HEK293 (cell line): ENCODE measurements at regions of chr10 and their contacts with region 1.

Region 1: GRCh38 chr10:79374312-79375191 is 27.3 kb downstream of the PPIF start:
- H3K4me3 ChIP-seq: no peak overlapping the region
- H3K27ac ChIP-seq: no peak overlapping the region
- H3K4me1 ChIP-seq: no peaks in the 10 kb centered on the region
- CTCF ChIP-seq: peak; percentile 87

Region 2: GRCh38 chr10:78931321-78932053 is 443.1 kb before region 1 on chr10:
- CTCF ChIA-PET with region 1: no interaction called
- POLR2A ChIA-PET with region 1: no interaction called
- H3K4me3 ChIP-seq: no peak overlapping the region
- H3K27ac ChIP-seq: no peak overlapping the region
- H3K4me1 ChIP-seq: no peaks in the 10 kb centered on the region
- CTCF ChIP-seq: no peak

Region 3: GRCh38 chr10:79468024-79468560 is 93.5 kb after region 1 on chr10:
- CTCF ChIA-PET with region 1: interaction called, 44 read pairs
- POLR2A ChIA-PET with region 1: no interaction called
- H3K4me3 ChIP-seq: no peak overlapping the region
- H3K27ac ChIP-seq: no peak overlapping the region
- H3K4me1 ChIP-seq: no peaks in the 10 kb centered on the region
- CTCF ChIP-seq: no peak

Region 4: DNA sequence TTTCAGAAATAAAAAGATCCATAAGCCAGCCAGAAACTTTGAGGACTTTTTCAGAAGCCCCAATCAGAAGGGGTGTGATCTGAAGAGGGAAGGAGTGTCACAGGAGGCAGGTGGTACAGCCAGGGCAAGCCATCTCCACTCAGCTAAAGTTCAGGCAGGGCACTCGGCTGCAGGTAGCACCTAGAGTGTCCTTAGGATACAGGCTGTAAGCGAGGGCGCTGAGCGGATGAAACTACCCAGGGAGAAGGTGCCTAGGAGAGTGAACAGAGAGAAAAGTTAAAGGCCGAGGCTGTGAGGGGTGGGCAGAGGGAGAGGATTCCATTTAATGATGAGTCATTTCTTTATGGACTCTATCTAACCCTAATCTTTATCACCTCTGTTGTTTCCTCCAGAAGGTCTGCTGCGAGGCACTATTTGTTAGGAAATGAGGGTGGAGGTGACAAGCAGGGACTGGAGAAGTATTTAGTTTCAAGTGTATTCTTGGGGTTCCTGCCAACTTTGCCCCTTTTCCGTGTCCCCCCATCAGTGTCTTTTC is 100.6 kb after region 1 on chr10:
- CTCF ChIA-PET with region 1: interaction called, 44 read pairs
- POLR2A ChIA-PET with region 1: no interaction called
- H3K4me3 ChIP-seq: no peak overlapping the region
- H3K27ac ChIP-seq: no peak overlapping the region
- H3K4me1 ChIP-seq: no peaks in the 10 kb centered on the region
- CTCF ChIP-seq: no peak

Region 5: GRCh38 chr10:79487296-79488194 is 113.0 kb after region 1 on chr10:
- CTCF ChIA-PET with region 1: interaction called, 85 read pairs
- POLR2A ChIA-PET with region 1: interaction called, 3 read pairs
- H3K4me3 ChIP-seq: no peak overlapping the region
- H3K27ac ChIP-seq: no peak overlapping the region
- H3K4me1 ChIP-seq: no peaks in the 10 kb centered on the region
- CTCF ChIP-seq: 0 out of 2 replicates have a peak, but pooled peaks have one; percentile 21

Region 6: DNA sequence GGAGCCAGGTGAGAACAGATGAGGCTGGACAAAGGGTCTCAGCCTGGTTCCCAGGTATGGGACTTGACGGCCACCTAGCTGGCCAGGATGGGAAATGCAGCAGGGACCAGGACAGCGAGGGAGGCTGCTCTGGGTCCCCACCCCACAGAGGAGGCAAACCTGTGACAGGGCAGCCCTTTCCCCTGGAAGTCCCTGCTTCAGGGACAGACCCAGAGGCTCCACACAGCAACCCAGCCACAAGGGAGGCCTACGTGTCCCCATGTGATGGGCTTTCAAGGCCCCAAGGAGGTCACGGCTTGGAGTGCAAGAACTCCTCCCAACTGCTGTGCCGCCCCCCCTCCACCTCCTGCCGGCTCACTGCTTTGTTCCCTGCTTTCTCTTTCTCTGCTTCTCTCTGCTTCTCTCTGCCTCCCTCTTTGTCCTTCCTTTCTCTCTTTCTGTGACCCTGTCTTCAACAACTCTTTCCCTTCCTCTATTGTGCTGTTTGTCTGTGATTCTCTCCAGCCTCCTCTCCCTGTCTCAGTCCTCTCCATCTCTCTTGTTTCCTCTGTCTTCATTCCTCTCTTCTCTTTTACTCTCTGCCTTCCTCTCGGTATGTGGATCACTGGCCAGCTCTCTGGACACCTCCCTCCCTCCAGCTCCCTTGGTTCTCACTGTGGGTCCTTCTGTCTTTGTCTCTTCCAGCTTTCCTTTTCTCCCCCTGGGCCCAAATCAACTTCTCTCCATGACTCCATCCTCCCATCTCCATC is 128.2 kb after region 1 on chr10:
- CTCF ChIA-PET with region 1: interaction called, 55 read pairs
- POLR2A ChIA-PET with region 1: no interaction called
- H3K4me3 ChIP-seq: no peak overlapping the region
- H3K27ac ChIP-seq: no peak overlapping the region
- H3K4me1 ChIP-seq: no peaks in the 10 kb centered on the region
- CTCF ChIP-seq: peak; percentile 32; the same call in 1 of the 2 replicates